Activated CD4-positive, alpha-beta memory T cell treated with anti-CD3 and anti-CD28 coated beads for 36 hours (primary cell): ENCODE measurements at regions of chr16 and their contacts with region 1.

Region 1: DNA sequence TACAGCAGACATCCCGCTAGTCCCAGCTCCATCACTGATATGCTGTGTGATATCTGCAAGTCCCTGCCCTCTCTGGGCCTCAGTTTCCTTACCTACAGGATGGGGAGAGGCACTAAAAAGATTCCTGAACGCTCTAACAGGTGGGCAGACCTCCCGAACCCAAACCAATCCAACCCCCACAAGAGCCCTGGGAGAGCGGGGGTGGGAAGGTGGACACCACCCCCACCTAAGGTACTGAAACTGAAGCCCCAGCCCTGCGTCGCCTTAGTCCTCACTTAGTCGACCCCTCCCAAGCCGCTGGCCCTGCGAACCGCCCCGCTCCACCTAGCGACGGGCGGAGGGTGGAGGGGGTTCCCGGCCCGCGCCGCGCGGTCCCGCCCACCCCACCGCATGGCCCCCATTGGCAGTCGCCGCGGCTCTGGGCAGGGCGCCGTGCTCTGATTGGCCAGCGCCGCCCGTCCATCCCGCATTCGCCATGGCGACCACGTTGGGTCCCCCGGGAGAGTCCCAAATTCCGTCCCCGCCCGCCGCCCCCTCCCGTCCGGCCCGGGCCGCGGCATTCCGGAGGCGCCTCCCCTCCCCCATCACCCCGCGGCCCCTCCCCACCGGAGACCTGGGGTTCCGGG is 578 bp downstream of the CCDC102A start:
- DNase-seq: peak; percentile 97
- H3K4me3 Mint-ChIP-seq: peak overlapping the region; percentile 86
- H3K27ac Mint-ChIP-seq: peak overlapping the region; percentile 94
- H3K4me1 Mint-ChIP-seq: peaks cover 72% of the 10 kb centered on the region
- H3K27me3 Mint-ChIP-seq: no peaks in the 10 kb centered on the region

Region 2: GRCh38 chr16:56450986-56451752 is 1084.6 kb before region 1 on chr16 and contains the starts of genes NUDT21 and OGFOD1:
- CTCF ChIA-PET with region 1: no interaction called
- POLR2A ChIA-PET with region 1: no interaction called
- intact Hi-C with region 1: loop called (anchors 5 kb)
- DNase-seq: peak; percentile 95
- H3K4me3 Mint-ChIP-seq: peak within 1 kb of the TSS; percentile 95
- H3K27ac Mint-ChIP-seq: peak within 1 kb of the TSS; percentile 89
- H3K4me1 Mint-ChIP-seq: peaks cover 56% of the 10 kb centered on the region
- H3K27me3 Mint-ChIP-seq: no peaks in the 10 kb centered on the region
- total RNA-seq, gene NUDT21: 352 to 361 TPM
- total RNA-seq, gene OGFOD1: 63.0 to 66.4 TPM

Region 3: GRCh38 chr16:57475711-57476339 is 60.0 kb before region 1 on chr16:
- CTCF ChIA-PET with region 1: no interaction called
- POLR2A ChIA-PET with region 1: no interaction called
- intact Hi-C with region 1: loop called (anchors 5 kb)
- DNase-seq: peak; percentile 96
- H3K4me3 Mint-ChIP-seq: peak overlapping the region; percentile 6
- H3K27ac Mint-ChIP-seq: peak overlapping the region; percentile 45
- H3K4me1 Mint-ChIP-seq: peaks cover 14% of the 10 kb centered on the region
- H3K27me3 Mint-ChIP-seq: no peaks in the 10 kb centered on the region

Region 4: GRCh38 chr16:57600048-57600835 is 64.4 kb after region 1 on chr16:
- CTCF ChIA-PET with region 1: no interaction called
- POLR2A ChIA-PET with region 1: interaction called, 5 read pairs
- intact Hi-C with region 1: loop called (anchors 2 kb)
- DNase-seq: peak; percentile 71
- H3K4me3 Mint-ChIP-seq: no peak overlapping the region
- H3K27ac Mint-ChIP-seq: no peak overlapping the region
- H3K4me1 Mint-ChIP-seq: peaks cover 31% of the 10 kb centered on the region
- H3K27me3 Mint-ChIP-seq: no peaks in the 10 kb centered on the region

Region 5: DNA sequence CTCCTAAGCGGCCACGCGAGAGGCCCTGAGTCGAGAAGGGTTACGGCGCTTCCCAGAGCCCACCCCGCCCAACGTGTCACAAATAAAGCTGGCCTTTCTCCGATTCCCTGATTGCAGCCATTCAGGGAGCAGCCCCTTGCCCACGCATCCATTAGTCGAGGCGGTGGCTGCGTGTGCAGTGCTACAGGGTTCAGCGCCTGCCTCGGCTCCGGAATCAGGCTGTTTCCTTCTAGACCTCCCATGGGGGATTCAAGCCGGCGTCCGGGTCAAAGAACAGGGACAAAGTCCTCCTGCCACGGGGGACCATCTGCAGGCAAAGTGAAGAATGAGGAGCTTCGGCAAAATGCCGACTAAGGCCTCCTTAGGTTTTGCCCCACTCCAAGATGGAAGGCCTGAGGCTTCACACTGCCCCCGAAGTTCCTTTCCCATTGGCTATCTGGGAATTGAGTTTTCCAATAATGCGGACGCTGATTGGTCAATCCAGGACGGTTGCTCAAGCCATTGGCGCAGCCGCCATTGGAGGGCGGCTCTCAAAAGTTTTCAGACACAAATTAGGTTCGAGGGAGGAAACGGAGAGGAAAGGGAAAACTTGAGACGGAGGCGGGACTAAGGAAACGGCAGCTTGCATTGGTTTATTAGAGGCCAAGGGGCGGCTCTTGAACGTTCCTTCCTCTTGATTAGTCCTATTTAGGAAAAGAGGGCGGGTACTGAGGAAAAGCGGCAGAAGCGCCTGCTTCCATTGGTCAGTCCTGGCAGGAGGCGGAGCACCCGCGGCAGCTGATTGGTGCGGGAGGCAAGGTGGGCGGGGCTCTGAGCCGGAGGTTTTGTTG is 199.3 kb after region 1 on chr16:
- CTCF ChIA-PET with region 1: no interaction called
- POLR2A ChIA-PET with region 1: no interaction called
- intact Hi-C with region 1: loop called (anchors 2 kb)
- DNase-seq: peak; percentile 98
- H3K4me3 Mint-ChIP-seq: peak overlapping the region; percentile 99
- H3K27ac Mint-ChIP-seq: peak overlapping the region; percentile 87
- H3K4me1 Mint-ChIP-seq: peaks cover 27% of the 10 kb centered on the region
- H3K27me3 Mint-ChIP-seq: peaks cover 2% of the 10 kb centered on the region